A673 (cell line): ENCODE measurements at regions of chr7 and their contacts with region 1.

Region 1: DNA sequence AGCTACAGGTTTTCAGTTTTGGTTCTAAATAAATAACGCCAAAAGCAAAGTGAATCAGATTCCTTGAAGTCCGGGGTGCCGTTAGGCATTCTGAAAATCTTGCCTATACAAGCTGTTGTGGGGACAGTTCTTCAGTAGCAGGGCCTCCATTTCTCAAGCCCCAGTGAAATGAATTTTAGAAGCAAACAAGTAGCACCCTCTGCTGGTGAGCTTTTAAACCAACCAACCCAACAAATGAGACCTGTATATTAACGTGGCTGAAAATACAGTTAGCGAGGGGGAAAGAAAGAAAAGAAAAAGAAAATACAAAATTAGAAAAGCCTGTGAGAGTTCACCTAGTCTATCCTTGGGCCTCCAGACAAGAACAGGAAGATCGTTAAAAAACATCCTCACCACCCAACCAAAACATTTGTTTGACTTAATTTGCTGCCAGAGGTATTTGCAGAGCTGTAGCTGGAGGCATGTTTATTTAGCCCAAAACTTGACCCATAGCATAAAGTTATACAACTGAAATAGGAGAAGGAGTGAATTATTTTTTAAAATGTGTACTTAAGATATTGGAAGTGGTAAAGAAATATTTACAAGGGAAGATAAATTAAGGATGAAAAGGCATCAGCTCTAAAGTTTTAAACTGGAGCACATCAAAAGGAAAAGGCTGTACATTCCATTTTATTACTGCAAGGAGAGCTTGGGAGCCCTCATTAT is 98.9 kb downstream of the DYNC1I1 start:
- DNase-seq: peak; percentile 78
- H3K4me3 ChIP-seq: no peak overlapping the region
- H3K27ac ChIP-seq: no peak overlapping the region
- H3K4me1 ChIP-seq: no peaks in the 10 kb centered on the region
- H3K27me3 ChIP-seq: no peaks in the 10 kb centered on the region
- CTCF ChIP-seq: peak; percentile 83

Region 2: GRCh38 chr7:95141755-95142154 is 729.5 kb before region 1 on chr7:
- CTCF ChIA-PET with region 1: no interaction called
- POLR2A ChIA-PET with region 1: no interaction called
- intact Hi-C with region 1: no loop called
- DNase-seq: no peak
- H3K4me3 ChIP-seq: no peak overlapping the region
- H3K27ac ChIP-seq: no peak overlapping the region
- H3K4me1 ChIP-seq: no peaks in the 10 kb centered on the region
- H3K27me3 ChIP-seq: no peaks in the 10 kb centered on the region
- CTCF ChIP-seq: no peak

Region 3: DNA sequence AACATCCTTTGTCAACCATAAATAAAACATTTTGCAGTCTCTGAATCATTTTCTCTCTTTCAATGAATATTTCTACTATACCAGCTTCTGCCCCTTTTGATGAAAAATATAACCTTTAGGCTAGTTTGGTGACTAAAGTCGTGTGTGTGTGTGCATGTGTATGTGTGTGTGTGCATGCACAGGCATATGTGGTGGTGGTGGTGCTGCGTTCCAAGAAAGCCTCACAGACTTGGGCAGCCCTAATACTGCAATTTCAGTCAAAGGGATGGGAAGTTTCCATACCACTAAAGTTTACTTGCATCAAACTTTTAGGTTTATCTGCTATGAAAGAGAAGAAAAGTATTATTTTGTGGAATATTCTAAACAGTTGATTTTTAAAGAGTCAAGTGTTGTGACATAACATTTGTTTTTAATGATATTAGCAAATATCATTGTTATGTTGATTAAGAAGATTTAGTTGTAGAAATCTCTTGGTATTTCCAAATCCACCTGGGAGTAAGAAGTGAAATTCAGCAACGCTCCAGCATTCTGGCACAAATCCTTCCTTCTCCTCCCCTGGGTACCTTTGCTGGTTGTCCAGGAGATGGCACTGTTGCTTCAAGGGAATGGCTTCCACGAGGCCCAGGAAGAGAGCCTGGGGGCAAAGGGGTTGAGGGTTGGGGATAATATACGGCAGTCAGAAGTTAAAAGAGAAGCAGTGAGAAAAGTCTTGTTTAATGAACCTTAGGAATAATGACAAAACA is 344.0 kb before region 1 on chr7:
- CTCF ChIA-PET with region 1: no interaction called
- POLR2A ChIA-PET with region 1: no interaction called
- intact Hi-C with region 1: loop called (anchors 10 kb)
- DNase-seq: peak; percentile 74
- H3K4me3 ChIP-seq: no peak overlapping the region
- H3K27ac ChIP-seq: no peak overlapping the region
- H3K4me1 ChIP-seq: no peaks in the 10 kb centered on the region
- H3K27me3 ChIP-seq: peaks cover 12% of the 10 kb centered on the region
- CTCF ChIP-seq: peak; percentile 88

Region 4: GRCh38 chr7:95723592-95724180 is 147.5 kb before region 1 on chr7:
- CTCF ChIA-PET with region 1: interaction called, 52 read pairs
- POLR2A ChIA-PET with region 1: no interaction called
- intact Hi-C with region 1: loop called (anchors 1 kb)
- DNase-seq: peak; percentile 81
- H3K4me3 ChIP-seq: no peak overlapping the region
- H3K27ac ChIP-seq: no peak overlapping the region
- H3K4me1 ChIP-seq: peaks cover 10% of the 10 kb centered on the region
- H3K27me3 ChIP-seq: no peaks in the 10 kb centered on the region
- CTCF ChIP-seq: peak; percentile 70

Region 5: GRCh38 chr7:95758187-95758586 is 113.0 kb before region 1 on chr7:
- CTCF ChIA-PET with region 1: no interaction called
- POLR2A ChIA-PET with region 1: no interaction called
- intact Hi-C with region 1: no loop called
- DNase-seq: peak; percentile 74
- H3K4me3 ChIP-seq: no peak overlapping the region
- H3K27ac ChIP-seq: no peak overlapping the region
- H3K4me1 ChIP-seq: no peaks in the 10 kb centered on the region
- H3K27me3 ChIP-seq: peaks cover 14% of the 10 kb centered on the region
- CTCF ChIP-seq: no peak

Region 6: GRCh38 chr7:96016056-96016586 is 144.9 kb after region 1 on chr7:
- CTCF ChIA-PET with region 1: no interaction called
- POLR2A ChIA-PET with region 1: no interaction called
- intact Hi-C with region 1: no loop called
- DNase-seq: no peak
- H3K4me3 ChIP-seq: no peak overlapping the region
- H3K27ac ChIP-seq: no peak overlapping the region
- H3K4me1 ChIP-seq: no peaks in the 10 kb centered on the region
- H3K27me3 ChIP-seq: no peaks in the 10 kb centered on the region
- CTCF ChIP-seq: no peak

Region 7: GRCh38 chr7:96266580-96266979 is 395.4 kb after region 1 on chr7:
- CTCF ChIA-PET with region 1: no interaction called
- POLR2A ChIA-PET with region 1: no interaction called
- intact Hi-C with region 1: no loop called
- DNase-seq: no peak
- H3K4me3 ChIP-seq: no peak overlapping the region
- H3K27ac ChIP-seq: no peak overlapping the region
- H3K4me1 ChIP-seq: no peaks in the 10 kb centered on the region
- H3K27me3 ChIP-seq: no peaks in the 10 kb centered on the region
- CTCF ChIP-seq: no peak